ENCODE measurements at regions of chr2 and their contacts with region 1.

Region 1: GRCh38 chr2:102841107-102841840 is 79.4 kb downstream of the TMEM182 start:
- DNase-seq: peak; percentile 77
- ATAC-seq: peak; percentile 98
- H3K4me3 Mint-ChIP-seq: no peak overlapping the region
- H3K27ac Mint-ChIP-seq: no peak overlapping the region
- H3K4me1 Mint-ChIP-seq: peaks cover 12% of the 10 kb centered on the region
- H3K27me3 Mint-ChIP-seq: no peaks in the 10 kb centered on the region
- CTCF ChIP-seq: no peak; the same call in 1 of the 2 replicates

Region 2: GRCh38 chr2:102677244-102678215 is 163.7 kb before region 1 on chr2:
- CTCF ChIA-PET with region 1: no interaction called
- POLR2A ChIA-PET with region 1: no interaction called
- DNase-seq: no peak
- ATAC-seq: no peak
- H3K4me3 Mint-ChIP-seq: no peak overlapping the region
- H3K27ac Mint-ChIP-seq: no peak overlapping the region
- H3K4me1 Mint-ChIP-seq: no peaks in the 10 kb centered on the region
- H3K27me3 Mint-ChIP-seq: no peaks in the 10 kb centered on the region; the same call in 1 of the 2 replicates
- CTCF ChIP-seq: no peak

Region 3: DNA sequence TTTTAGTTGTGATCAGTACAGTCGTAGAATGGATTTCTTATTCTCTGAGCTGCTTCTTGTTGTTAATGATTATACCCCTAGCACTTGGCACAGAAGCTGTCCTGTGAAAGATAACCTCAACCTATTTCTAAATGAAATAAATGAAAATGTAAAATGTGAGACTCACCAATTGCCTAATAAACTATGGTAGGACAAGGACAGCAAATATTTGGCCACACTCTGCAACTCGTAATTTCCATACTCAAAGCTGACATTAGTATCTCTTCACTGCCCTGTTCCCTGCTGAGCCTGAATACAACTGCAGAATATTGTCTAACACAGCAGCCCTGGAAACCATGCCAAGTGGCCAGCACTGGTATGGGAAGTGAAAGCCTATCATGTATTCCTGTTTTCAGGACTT is 44.9 kb before region 1 on chr2:
- CTCF ChIA-PET with region 1: no interaction called
- POLR2A ChIA-PET with region 1: no interaction called
- DNase-seq: no peak
- ATAC-seq: no peak
- H3K4me3 Mint-ChIP-seq: no peak overlapping the region
- H3K27ac Mint-ChIP-seq: no peak overlapping the region
- H3K4me1 Mint-ChIP-seq: peaks cover 21% of the 10 kb centered on the region
- H3K27me3 Mint-ChIP-seq: no peaks in the 10 kb centered on the region; the same call in 1 of the 2 replicates
- CTCF ChIP-seq: no peak

Region 4: DNA sequence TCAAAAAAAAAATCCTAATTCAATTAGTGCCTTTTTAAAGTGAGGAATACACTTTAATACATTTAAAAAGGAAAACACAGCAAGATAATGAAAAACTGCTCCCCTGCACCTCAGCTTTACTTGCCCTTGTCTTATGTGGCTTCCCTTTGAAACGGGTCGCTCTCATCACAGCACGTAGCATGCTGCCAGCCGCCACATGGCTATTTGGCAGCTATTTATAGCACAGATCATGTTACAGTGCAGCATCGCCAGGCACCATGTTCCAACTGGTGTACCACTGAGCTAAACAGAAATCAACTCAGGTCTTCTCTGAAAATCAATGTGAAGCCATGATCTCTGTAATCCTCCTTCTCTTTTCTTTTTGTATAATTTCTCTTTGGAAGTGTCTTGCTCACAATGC is 14.4 kb before region 1 on chr2:
- CTCF ChIA-PET with region 1: interaction called, 38 read pairs
- POLR2A ChIA-PET with region 1: no interaction called
- DNase-seq: no peak
- ATAC-seq: peak; percentile 70
- H3K4me3 Mint-ChIP-seq: no peak overlapping the region
- H3K27ac Mint-ChIP-seq: no peak overlapping the region
- H3K4me1 Mint-ChIP-seq: peaks cover 11% of the 10 kb centered on the region
- H3K27me3 Mint-ChIP-seq: no peaks in the 10 kb centered on the region
- CTCF ChIP-seq: no peak

Region 5: DNA sequence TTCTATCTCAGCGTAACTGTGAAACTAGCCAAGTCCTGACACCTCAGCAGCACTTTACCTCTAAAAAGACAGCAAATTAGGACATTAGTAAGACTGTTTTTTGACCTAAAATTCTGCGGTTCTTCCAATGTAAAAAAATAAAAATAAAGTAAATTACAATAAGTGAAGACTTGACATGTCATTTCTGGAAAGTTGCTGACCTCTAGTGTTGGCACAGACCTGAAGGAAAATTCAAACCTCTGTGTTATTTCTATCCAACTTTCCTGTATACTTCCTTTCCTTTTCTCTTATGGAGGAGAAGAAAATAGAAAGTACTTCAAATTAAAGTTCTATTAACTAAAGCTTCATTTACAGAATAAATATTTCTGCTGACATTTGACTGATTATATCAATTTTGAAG is 31.1 kb after region 1 on chr2:
- CTCF ChIA-PET with region 1: interaction called, 25 read pairs
- POLR2A ChIA-PET with region 1: no interaction called
- DNase-seq: no peak
- ATAC-seq: no peak
- H3K4me3 Mint-ChIP-seq: no peak overlapping the region
- H3K27ac Mint-ChIP-seq: no peak overlapping the region
- H3K4me1 Mint-ChIP-seq: no peaks in the 10 kb centered on the region
- H3K27me3 Mint-ChIP-seq: no peaks in the 10 kb centered on the region
- CTCF ChIP-seq: no peak

Region 6: GRCh38 chr2:102975996-102976975 is 135.0 kb after region 1 on chr2:
- CTCF ChIA-PET with region 1: interaction called, 20 read pairs
- POLR2A ChIA-PET with region 1: no interaction called
- DNase-seq: peak; percentile 64
- ATAC-seq: peak; percentile 96
- H3K4me3 Mint-ChIP-seq: no peak overlapping the region
- H3K27ac Mint-ChIP-seq: no peak overlapping the region
- H3K4me1 Mint-ChIP-seq: peaks cover 29% of the 10 kb centered on the region
- H3K27me3 Mint-ChIP-seq: no peaks in the 10 kb centered on the region
- CTCF ChIP-seq: no peak

Region 7: GRCh38 chr2:103008586-103008985 is 167.3 kb after region 1 on chr2:
- CTCF ChIA-PET with region 1: interaction called, 10 read pairs
- POLR2A ChIA-PET with region 1: no interaction called
- DNase-seq: peak; percentile 23
- ATAC-seq: peak; percentile 96
- H3K4me3 Mint-ChIP-seq: no peak overlapping the region
- H3K27ac Mint-ChIP-seq: no peak overlapping the region
- H3K4me1 Mint-ChIP-seq: peaks cover 3% of the 10 kb centered on the region; the same call in 1 of the 2 replicates
- H3K27me3 Mint-ChIP-seq: no peaks in the 10 kb centered on the region
- CTCF ChIP-seq: no peak

Region 8: DNA sequence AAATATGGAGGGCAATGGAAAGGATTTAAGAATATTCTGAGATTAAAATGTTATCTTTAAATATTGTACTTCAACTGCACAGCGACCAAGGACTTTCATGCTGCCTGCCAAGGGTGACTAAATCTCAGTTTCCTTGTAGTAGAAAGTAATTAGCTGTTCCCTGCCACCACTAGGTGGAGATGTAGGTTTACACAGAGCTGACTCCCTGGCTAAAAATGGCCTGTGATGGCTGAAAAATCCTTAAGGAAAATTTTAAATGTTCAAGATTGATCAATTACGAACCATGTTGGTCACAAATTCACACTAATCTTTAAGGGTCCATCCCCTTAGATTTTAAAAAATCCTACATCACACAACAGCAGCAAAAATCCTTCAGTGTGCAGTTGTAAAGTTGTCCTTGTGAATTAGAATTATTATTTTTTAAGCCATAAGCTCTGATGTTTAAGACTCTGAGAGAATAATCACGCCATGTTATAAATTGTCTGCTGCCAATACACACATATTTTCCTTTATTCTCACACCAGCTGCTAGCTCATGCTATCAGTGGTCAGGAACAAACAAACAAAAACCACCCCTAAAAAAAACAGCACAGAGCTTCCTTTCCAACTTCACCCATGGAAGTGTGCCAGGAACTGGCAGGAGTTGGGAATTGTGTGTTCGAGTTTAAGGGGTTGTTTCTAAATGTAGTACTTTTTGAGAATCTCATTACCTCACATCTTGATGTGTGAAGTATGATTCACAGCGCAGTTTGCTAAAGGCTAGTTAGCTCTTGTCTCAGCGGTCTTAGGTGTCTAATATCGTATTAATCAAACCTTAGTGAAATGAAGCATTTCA is 320.4 kb after region 1 on chr2:
- CTCF ChIA-PET with region 1: interaction called, 17 read pairs
- POLR2A ChIA-PET with region 1: no interaction called
- DNase-seq: no peak
- ATAC-seq: peak; percentile 59; the same call in 1 of the 2 replicates
- H3K4me3 Mint-ChIP-seq: no peak overlapping the region
- H3K27ac Mint-ChIP-seq: no peak overlapping the region
- H3K4me1 Mint-ChIP-seq: peaks cover 33% of the 10 kb centered on the region
- H3K27me3 Mint-ChIP-seq: no peaks in the 10 kb centered on the region
- CTCF ChIP-seq: peak; percentile 62

Measured in WTC11 (cell line).